ENCODE measurements at regions of chr3 and their contacts with region 1.

Region 1: DNA sequence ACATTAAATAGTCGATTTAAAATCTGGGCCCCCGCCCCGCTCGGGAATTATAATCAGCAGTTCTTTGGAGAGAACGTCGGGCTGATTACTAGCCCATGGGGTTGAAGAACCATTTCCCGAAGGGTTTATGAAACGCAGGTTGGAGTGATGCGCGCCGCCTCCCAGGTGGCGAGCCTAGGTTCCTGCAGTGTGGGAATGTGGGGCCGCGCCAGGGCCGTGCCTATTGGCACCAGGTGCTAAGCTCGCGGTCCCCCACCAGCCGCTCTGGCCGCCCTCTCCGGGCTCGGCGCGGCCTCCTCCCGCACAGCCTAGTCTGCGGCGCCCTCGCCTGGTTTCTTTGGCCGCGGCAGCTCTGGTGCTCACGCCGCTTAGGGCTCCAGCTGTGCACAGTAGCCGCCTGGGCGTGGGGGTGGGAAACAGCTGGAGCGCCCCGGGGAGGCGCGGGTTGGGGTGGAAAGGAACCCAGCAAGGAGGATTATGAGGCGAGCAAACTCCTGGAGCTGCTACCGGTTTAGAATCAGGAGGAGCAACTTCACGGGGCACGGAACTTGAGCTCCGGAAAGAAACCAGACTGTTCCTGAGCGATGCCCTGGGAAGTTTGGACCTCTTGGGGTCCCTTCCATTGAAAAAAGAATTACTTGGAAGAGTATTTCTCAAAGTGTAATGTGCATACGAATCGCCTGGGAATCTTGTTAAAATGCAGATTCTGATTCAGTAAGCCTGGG is 5.6 kb upstream of the MECOM start:
- DNase-seq: peak; percentile 68
- H3K4me3 Mint-ChIP-seq: peak overlapping the region; percentile 48
- H3K27ac Mint-ChIP-seq: no peak overlapping the region
- H3K4me1 Mint-ChIP-seq: peaks cover 17% of the 10 kb centered on the region
- H3K27me3 Mint-ChIP-seq: peaks cover 78% of the 10 kb centered on the region

Region 2: GRCh38 chr3:169149349-169149890 is 519.7 kb before region 1 on chr3:
- CTCF ChIA-PET with region 1: interaction called, 38 read pairs
- POLR2A ChIA-PET with region 1: interaction called, 3 read pairs
- intact Hi-C with region 1: loop called (anchors 1 kb)
- DNase-seq: peak; percentile 84
- H3K4me3 Mint-ChIP-seq: peak overlapping the region; percentile 36
- H3K27ac Mint-ChIP-seq: no peak overlapping the region
- H3K4me1 Mint-ChIP-seq: peaks cover 21% of the 10 kb centered on the region
- H3K27me3 Mint-ChIP-seq: peaks cover 57% of the 10 kb centered on the region

Region 3: GRCh38 chr3:169295126-169295525 is 374.0 kb before region 1 on chr3:
- CTCF ChIA-PET with region 1: no interaction called
- POLR2A ChIA-PET with region 1: no interaction called
- intact Hi-C with region 1: loop called (anchors 1 kb)
- DNase-seq: no peak
- H3K4me3 Mint-ChIP-seq: no peak overlapping the region
- H3K27ac Mint-ChIP-seq: no peak overlapping the region
- H3K4me1 Mint-ChIP-seq: no peaks in the 10 kb centered on the region
- H3K27me3 Mint-ChIP-seq: no peaks in the 10 kb centered on the region

Region 4: GRCh38 chr3:169564883-169565282 is 104.2 kb before region 1 on chr3:
- CTCF ChIA-PET with region 1: interaction called, 3 read pairs
- POLR2A ChIA-PET with region 1: no interaction called
- intact Hi-C with region 1: loop called (anchors 10 kb)
- DNase-seq: no peak
- H3K4me3 Mint-ChIP-seq: no peak overlapping the region
- H3K27ac Mint-ChIP-seq: no peak overlapping the region
- H3K4me1 Mint-ChIP-seq: peaks cover 4% of the 10 kb centered on the region
- H3K27me3 Mint-ChIP-seq: peaks cover 3% of the 10 kb centered on the region

Region 5: DNA sequence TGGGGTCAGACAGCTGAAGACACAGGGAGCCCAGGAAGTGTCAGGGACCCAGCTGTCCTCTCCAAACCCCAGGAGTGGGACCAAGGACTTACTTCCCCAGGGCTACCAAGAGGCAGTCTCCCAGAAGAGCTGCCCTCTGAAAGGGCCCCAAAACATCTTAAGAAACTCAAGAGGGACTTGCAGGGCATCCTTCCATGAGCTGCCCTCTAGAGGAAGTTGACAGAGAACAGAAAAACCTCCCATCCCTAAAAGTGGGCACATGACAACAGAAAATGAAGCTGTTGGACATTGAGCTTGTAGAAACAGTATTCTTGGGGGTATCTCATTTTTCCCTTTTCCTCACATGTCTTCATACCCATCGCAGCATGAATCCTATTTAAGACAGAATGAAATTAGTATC is 64.6 kb before region 1 on chr3:
- CTCF ChIA-PET with region 1: no interaction called
- POLR2A ChIA-PET with region 1: no interaction called
- intact Hi-C with region 1: no loop called
- DNase-seq: no peak
- H3K4me3 Mint-ChIP-seq: no peak overlapping the region
- H3K27ac Mint-ChIP-seq: no peak overlapping the region
- H3K4me1 Mint-ChIP-seq: no peaks in the 10 kb centered on the region
- H3K27me3 Mint-ChIP-seq: peaks cover 2% of the 10 kb centered on the region

Measured in activated CD4-positive, alpha-beta memory T cell treated with anti-CD3 and anti-CD28 coated beads for 36 hours (primary cell).